Panc1 (cell line): ENCODE measurements at regions of chr4 and their contacts with region 1.

Region 1: GRCh38 chr4:82811838-82812341 is 13.3 kb upstream of the SCD5 start:
- DNase-seq: no peak
- ATAC-seq: no peak; the same call in 1 of the 2 replicates
- H3K4me3 ChIP-seq: no peak overlapping the region
- H3K27ac ChIP-seq: no peak overlapping the region
- H3K4me1 ChIP-seq: peaks cover 4% of the 10 kb centered on the region; the same call in 1 of the 2 replicates
- H3K27me3 ChIP-seq: no peaks in the 10 kb centered on the region
- CTCF ChIP-seq: no peak

Region 2: GRCh38 chr4:82753725-82754410 is 58.0 kb before region 1 on chr4:
- CTCF ChIA-PET with region 1: interaction called, 14 read pairs
- POLR2A ChIA-PET with region 1: no interaction called
- in situ Hi-C with region 1: no loop called
- intact Hi-C with region 1: no loop called
- DNase-seq: no peak
- ATAC-seq: no peak
- H3K4me3 ChIP-seq: no peak overlapping the region
- H3K27ac ChIP-seq: no peak overlapping the region
- H3K4me1 ChIP-seq: no peaks in the 10 kb centered on the region
- H3K27me3 ChIP-seq: no peaks in the 10 kb centered on the region
- CTCF ChIP-seq: no peak

Region 3: GRCh38 chr4:82842593-82842992 is 30.7 kb after region 1 on chr4:
- CTCF ChIA-PET with region 1: interaction called, 14 read pairs
- POLR2A ChIA-PET with region 1: no interaction called
- in situ Hi-C with region 1: no loop called
- intact Hi-C with region 1: no loop called
- DNase-seq: no peak
- ATAC-seq: no peak
- H3K4me3 ChIP-seq: no peak overlapping the region
- H3K27ac ChIP-seq: no peak overlapping the region
- H3K4me1 ChIP-seq: no peaks in the 10 kb centered on the region
- H3K27me3 ChIP-seq: no peaks in the 10 kb centered on the region
- CTCF ChIP-seq: peak; percentile 28; the same call in 1 of the 2 replicates

Region 4: DNA sequence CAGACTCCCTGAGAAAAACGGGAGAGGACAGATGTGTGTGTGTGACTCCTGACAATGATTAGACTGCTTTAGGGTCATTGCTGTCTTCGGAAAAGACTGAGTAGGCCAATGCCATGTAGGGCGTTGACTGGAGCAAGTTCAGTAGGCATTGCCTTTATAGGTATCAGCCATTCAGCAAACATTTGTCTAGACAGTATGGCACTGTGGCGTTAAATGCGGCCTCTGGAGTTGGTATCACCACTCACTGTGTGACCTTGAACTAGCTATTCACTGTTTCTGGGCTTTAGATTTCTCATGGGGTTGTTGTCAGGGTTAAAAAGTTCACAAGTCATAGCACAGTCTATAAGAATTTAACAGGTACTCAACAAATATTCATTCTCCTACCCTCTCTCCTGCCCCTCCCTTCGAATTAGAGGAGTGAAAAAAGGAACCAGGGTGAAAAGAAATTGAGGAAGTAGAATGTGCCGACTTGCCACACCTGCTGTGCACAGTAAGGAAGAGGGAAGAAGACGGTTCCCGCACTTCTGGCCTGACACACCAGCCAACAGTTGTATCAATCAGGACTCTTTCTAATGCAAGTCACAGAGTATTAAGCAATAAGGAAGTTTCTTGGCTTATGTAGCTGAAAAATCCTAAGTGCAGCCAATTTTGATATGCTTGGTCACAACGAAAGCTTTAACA is 385.8 kb after region 1 on chr4:
- CTCF ChIA-PET with region 1: no interaction called
- POLR2A ChIA-PET with region 1: no interaction called
- in situ Hi-C with region 1: no loop called
- intact Hi-C with region 1: no loop called
- DNase-seq: no peak
- ATAC-seq: no peak
- H3K4me3 ChIP-seq: no peak overlapping the region
- H3K27ac ChIP-seq: peak overlapping the region; percentile 39; the same call in 1 of the 2 replicates
- H3K4me1 ChIP-seq: no peaks in the 10 kb centered on the region
- H3K27me3 ChIP-seq: no peaks in the 10 kb centered on the region
- CTCF ChIP-seq: no peak